CD8-positive, alpha-beta T cell (primary cell): ENCODE measurements at regions of chr12 and their contacts with region 1.

Region 1: GRCh38 chr12:92928962-92929915 is at the start of gene EEA1:
- DNase-seq: peak; percentile 88 to 97 (median 95)
- ATAC-seq: peak; percentile 84
- H3K4me3 ChIP-seq: peak within 1 kb of the TSS; percentile 71 to 78
- H3K4me3 Mint-ChIP-seq: peak within 1 kb of the TSS; percentile 85
- H3K27ac ChIP-seq: peak within 1 kb of the TSS; percentile 85 to 90
- H3K27ac Mint-ChIP-seq: peak within 1 kb of the TSS; percentile 95
- H3K4me1 ChIP-seq: peaks cover 26% of the 10 kb centered on the region
- H3K4me1 Mint-ChIP-seq: peaks cover 40% of the 10 kb centered on the region
- H3K27me3 ChIP-seq: no peaks in the 10 kb centered on the region
- H3K27me3 Mint-ChIP-seq: no peaks in the 10 kb centered on the region
- CTCF ChIP-seq: no peak
- total RNA-seq, gene EEA1: 4.3 to 6.9 TPM

Region 2: GRCh38 chr12:91577586-91578539 is 1351.4 kb before region 1 on chr12:
- CTCF ChIA-PET with region 1: no interaction called
- POLR2A ChIA-PET with region 1: no interaction called
- intact Hi-C with region 1: no loop called
- DNase-seq: peak in 2 of 9 experiments; percentile 37 to 59
- ATAC-seq: peak; percentile 85
- H3K4me3 ChIP-seq: peak overlapping the region; percentile 34 to 39
- H3K4me3 Mint-ChIP-seq: peak overlapping the region; percentile 77
- H3K27ac ChIP-seq: no peak overlapping the region
- H3K27ac Mint-ChIP-seq: peak overlapping the region; percentile 50
- H3K4me1 ChIP-seq: no peaks in the 10 kb centered on the region
- H3K4me1 Mint-ChIP-seq: peaks cover 14% of the 10 kb centered on the region
- H3K27me3 ChIP-seq: no peaks in the 10 kb centered on the region
- H3K27me3 Mint-ChIP-seq: no peaks in the 10 kb centered on the region
- CTCF ChIP-seq: peak; percentile 87

Region 3: DNA sequence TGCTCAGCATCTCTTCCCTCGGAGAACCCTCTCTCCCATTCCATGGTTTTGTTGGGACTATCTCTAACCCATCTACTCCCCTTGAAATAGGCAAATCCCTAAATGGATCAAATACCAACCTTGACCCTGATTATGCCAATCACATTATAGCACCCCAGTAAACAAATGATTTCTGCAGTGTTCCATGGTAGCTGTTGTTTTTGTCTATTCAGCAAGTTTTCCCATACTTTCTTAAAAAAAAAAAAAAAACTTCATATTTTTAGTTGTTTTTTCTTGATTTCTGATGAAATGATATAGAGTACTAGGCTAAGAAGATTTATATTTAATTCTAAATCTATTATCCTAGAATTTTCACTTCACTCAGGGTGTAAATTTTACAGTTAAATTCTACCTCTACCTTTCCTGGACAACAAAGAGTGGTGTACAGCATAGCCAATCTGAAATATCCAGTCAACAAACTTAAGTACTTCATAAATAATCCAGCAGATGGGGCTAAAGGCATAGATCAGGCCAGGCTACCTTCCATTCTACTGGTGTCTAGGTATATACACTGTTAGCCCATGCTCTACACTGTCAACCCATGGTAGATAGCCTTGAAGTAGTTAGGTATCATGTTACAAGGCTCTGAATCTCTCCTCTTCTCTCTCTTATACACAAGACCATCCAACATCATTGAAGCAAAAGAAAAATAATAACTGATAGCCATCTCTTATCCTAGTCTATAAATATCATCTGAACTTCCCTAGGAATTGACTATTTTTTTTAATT is 144.3 kb before region 1 on chr12:
- CTCF ChIA-PET with region 1: interaction called, 31 read pairs
- POLR2A ChIA-PET with region 1: no interaction called
- intact Hi-C with region 1: loop called (anchors 1 to 5 kb)
- DNase-seq: peak in 3 of 9 experiments; percentile 28 to 77 (median 68)
- ATAC-seq: peak; percentile 99
- H3K4me3 ChIP-seq: no peak overlapping the region
- H3K4me3 Mint-ChIP-seq: no peak overlapping the region
- H3K27ac ChIP-seq: no peak overlapping the region
- H3K27ac Mint-ChIP-seq: no peak overlapping the region
- H3K4me1 ChIP-seq: no peaks in the 10 kb centered on the region
- H3K4me1 Mint-ChIP-seq: peaks cover 11% of the 10 kb centered on the region
- H3K27me3 ChIP-seq: no peaks in the 10 kb centered on the region
- H3K27me3 Mint-ChIP-seq: no peaks in the 10 kb centered on the region
- CTCF ChIP-seq: peak; percentile 61

Region 4: GRCh38 chr12:92854344-92854743 is 74.9 kb before region 1 on chr12:
- CTCF ChIA-PET with region 1: no interaction called
- POLR2A ChIA-PET with region 1: no interaction called
- intact Hi-C with region 1: loop called in 1 of 2 experiments (anchors 5 kb)
- DNase-seq: no peak
- ATAC-seq: no peak
- H3K4me3 ChIP-seq: no peak overlapping the region
- H3K4me3 Mint-ChIP-seq: no peak overlapping the region
- H3K27ac ChIP-seq: no peak overlapping the region
- H3K27ac Mint-ChIP-seq: peak overlapping the region; percentile 28
- H3K4me1 ChIP-seq: no peaks in the 10 kb centered on the region
- H3K4me1 Mint-ChIP-seq: peaks cover 3% of the 10 kb centered on the region
- H3K27me3 ChIP-seq: no peaks in the 10 kb centered on the region
- H3K27me3 Mint-ChIP-seq: no peaks in the 10 kb centered on the region
- CTCF ChIP-seq: no peak

Region 5: DNA sequence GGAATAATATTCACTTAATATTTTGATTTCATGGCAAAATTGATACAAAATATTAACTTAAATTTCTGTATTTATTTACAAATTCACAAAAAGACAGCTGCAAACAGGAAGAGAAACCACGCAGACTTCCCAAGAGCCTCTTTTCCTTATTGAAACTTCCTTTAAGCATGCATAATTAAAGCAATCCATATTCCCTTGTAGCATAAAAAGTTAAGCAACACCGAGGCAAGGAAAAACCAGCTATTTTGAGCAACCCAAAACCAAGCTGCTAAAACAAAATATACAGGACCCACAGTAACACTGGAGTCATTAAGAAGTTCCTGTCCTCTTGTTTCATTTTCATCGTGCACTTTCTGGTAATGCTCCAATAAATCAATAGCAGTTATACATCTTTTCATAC is 58.1 kb before region 1 on chr12:
- CTCF ChIA-PET with region 1: no interaction called
- POLR2A ChIA-PET with region 1: no interaction called
- intact Hi-C with region 1: no loop called
- DNase-seq: no peak
- ATAC-seq: no peak
- H3K4me3 ChIP-seq: no peak overlapping the region
- H3K4me3 Mint-ChIP-seq: no peak overlapping the region
- H3K27ac ChIP-seq: no peak overlapping the region
- H3K27ac Mint-ChIP-seq: no peak overlapping the region
- H3K4me1 ChIP-seq: no peaks in the 10 kb centered on the region
- H3K4me1 Mint-ChIP-seq: peaks cover 17% of the 10 kb centered on the region
- H3K27me3 ChIP-seq: no peaks in the 10 kb centered on the region
- H3K27me3 Mint-ChIP-seq: no peaks in the 10 kb centered on the region
- CTCF ChIP-seq: no peak

Region 6: DNA sequence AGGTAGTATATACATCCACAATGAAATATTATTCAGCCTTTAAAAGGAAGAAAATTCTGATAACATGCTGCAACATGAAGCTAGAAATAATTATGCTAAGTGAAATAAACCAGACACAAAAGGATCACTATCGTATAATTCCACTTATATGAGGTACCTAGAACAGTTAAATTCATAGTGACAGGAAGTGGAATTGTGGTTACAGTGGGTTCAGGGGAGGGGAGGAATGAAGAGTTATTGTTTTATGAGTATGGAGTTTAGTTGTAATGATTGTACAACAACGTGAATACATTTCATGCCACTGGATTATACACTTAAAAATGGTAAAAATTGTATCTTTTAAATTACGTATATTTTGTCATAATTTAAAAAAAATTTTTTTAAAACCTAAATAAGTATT is 21.1 kb before region 1 on chr12:
- CTCF ChIA-PET with region 1: interaction called, 58 read pairs
- POLR2A ChIA-PET with region 1: interaction called, 29 read pairs
- intact Hi-C with region 1: loop called (anchors 1 to 2 kb)
- DNase-seq: peak in 2 of 9 experiments; percentile 37 to 65
- ATAC-seq: peak; percentile 80
- H3K4me3 ChIP-seq: no peak overlapping the region
- H3K4me3 Mint-ChIP-seq: peak overlapping the region; percentile 53
- H3K27ac ChIP-seq: no peak overlapping the region
- H3K27ac Mint-ChIP-seq: peak overlapping the region; percentile 0
- H3K4me1 ChIP-seq: peaks cover 40% of the 10 kb centered on the region
- H3K4me1 Mint-ChIP-seq: peaks cover 67% of the 10 kb centered on the region
- H3K27me3 ChIP-seq: no peaks in the 10 kb centered on the region
- H3K27me3 Mint-ChIP-seq: no peaks in the 10 kb centered on the region
- CTCF ChIP-seq: no peak

Region 7: DNA sequence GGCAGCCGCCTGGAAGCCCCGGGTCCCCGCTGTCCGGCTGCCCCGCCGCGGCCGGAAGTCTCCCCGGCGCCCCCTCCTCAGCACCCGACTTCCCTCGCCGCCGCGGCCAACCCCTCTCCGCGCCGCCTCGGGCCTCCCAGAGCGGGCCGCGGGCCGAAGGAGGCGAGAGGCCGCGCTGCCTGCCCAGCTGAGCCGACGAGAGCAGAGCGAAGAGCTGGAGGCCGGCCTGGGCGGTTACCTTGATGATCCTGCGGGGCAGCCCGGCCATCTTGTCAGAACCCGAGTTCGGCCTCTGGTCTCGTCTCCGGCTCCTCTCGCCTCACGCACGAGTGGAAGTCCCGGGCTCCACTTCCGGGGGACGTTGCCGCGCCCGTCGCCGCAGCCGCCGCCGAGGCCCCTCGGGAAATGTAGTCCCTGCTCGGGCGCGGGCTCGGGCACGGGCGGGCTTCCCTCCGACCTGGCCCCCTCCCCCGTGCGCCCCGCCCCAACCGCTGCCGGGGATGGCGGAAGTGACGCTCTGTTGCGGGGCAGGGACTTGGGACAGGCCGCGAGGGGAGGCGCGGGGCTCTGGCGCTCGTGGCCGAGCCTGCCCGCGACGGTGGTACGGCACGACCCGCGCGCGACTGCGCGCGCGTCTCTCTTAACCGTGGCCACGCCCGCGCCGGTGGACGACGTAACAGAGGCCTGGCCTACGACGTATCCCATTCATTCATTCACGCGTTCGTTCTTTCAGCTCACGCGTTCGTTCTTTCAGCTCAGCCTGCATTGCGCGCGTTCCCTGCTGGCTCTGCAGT is 512.6 kb after region 1 on chr12 and contains the start of gene UBE2N:
- CTCF ChIA-PET with region 1: no interaction called
- POLR2A ChIA-PET with region 1: interaction called, 4 read pairs
- intact Hi-C with region 1: loop called (anchors 1 to 2 kb)
- DNase-seq: peak; percentile 92 to 97 (median 96)
- ATAC-seq: peak; percentile 83
- H3K4me3 ChIP-seq: peak within 1 kb of the TSS; percentile 78
- H3K4me3 Mint-ChIP-seq: peak within 1 kb of the TSS; percentile 97
- H3K27ac ChIP-seq: peak within 1 kb of the TSS; percentile 87 to 90
- H3K27ac Mint-ChIP-seq: peak within 1 kb of the TSS; percentile 96
- H3K4me1 ChIP-seq: peaks cover 47% of the 10 kb centered on the region
- H3K4me1 Mint-ChIP-seq: peaks cover 48% of the 10 kb centered on the region
- H3K27me3 ChIP-seq: no peaks in the 10 kb centered on the region
- H3K27me3 Mint-ChIP-seq: no peaks in the 10 kb centered on the region
- CTCF ChIP-seq: no peak
- total RNA-seq, gene UBE2N: 89.5 to 93.6 TPM

Region 8: DNA sequence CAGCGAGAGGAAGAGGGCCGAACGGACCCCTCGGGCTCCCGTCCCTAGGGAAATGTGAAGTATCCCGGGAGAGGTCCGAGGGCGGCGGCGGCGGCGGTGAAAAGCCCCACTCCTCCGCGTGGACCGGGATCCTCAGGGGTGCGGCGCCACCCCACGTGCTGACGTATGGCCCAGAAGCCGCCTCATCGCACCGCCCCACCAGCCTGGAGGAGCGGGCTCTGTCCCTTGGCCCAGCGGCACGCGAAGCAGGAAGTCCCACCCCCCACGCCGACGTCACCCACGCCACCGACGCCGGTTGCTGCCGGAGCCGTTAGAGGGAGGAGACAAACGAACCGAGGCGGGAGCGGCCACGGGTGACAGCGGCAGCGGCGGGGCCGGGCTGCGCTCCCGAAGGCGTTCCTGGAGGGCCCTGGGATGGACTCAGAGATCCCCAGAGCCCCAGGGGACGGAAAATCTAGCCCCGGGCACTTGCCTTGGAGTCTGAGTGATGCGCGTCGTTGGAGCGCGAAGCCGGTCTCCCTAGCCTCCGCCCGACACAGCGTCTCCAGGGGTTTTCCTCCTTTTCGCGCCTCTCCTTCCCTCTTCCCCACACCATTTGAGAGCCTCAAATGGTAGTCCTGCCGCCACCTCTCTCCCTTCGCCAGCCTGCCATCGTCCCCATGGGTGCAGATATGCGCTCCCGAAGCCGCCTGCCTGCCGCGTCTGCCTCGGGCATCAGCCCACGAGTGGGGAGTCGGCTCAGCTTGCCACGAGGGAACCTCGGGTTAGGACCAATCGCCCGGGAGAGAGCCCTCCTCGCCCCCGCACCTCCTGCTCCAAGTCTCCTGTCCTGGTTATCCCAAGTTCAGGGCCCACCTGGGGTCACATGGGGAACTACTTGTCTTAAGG is 1530.7 kb after region 1 on chr12 and contains the start of gene CEP83:
- CTCF ChIA-PET with region 1: no interaction called
- POLR2A ChIA-PET with region 1: no interaction called
- intact Hi-C with region 1: loop called (anchors 5 kb)
- DNase-seq: peak; percentile 90 to 98 (median 97)
- ATAC-seq: peak; percentile 96
- H3K4me3 ChIP-seq: peak within 1 kb of the TSS; percentile 94 to 96
- H3K4me3 Mint-ChIP-seq: peak within 1 kb of the TSS; percentile 96
- H3K27ac ChIP-seq: peak within 1 kb of the TSS; percentile 91 to 93
- H3K27ac Mint-ChIP-seq: peak within 1 kb of the TSS; percentile 94
- H3K4me1 ChIP-seq: peaks cover 6% of the 10 kb centered on the region
- H3K4me1 Mint-ChIP-seq: peaks cover 33% of the 10 kb centered on the region
- H3K27me3 ChIP-seq: peaks cover 0 to 2% of the 10 kb centered on the region in 2 experiments
- H3K27me3 Mint-ChIP-seq: peaks cover 5% of the 10 kb centered on the region
- CTCF ChIP-seq: no peak
- total RNA-seq, gene CEP83: 9.7 to 11.2 TPM